GM12878 (cell line): ENCODE measurements at regions of chr1 and their contacts with region 1.

Region 1: DNA sequence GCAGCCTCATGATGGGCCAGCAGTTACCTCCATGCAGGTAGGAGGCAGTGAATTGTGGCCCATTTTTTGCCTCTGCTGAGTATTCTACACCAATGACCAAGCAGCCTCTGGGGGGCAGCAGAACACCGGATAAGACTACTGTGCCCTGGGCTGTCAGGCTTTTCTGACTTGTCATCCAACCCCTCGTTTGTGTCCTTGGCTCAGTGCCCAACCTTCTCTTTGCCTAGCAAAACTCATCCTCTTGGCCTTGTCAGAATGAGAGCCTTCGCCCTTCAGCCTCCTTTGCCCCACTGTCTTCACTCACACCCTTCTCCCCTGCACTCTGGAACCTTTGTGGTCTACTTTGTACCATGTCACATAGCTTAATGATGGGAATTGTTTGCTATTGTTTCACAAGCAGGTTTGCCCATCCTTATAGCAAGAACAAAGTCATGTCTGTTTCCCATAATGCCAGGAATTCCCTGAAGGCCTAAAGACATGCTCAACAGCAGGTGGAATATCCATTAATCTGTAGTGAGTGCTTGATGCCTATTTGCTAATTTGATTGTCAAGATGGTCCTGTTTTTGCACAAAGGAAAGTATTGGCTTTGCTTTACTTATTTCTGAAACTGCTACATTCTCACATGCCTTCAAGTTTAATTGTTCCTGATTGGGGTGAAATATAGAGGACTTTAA is 255.9 kb downstream of the HHAT start:
- DNase-seq: peak; percentile 13
- ATAC-seq: peak; percentile 97
- H3K4me3 ChIP-seq: no peak overlapping the region
- H3K27ac ChIP-seq: no peak overlapping the region
- H3K4me1 ChIP-seq: no peaks in the 10 kb centered on the region
- H3K27me3 ChIP-seq: no peaks in the 10 kb centered on the region
- CTCF ChIP-seq: peak; percentile 74 to 78 (median 75)
- EP300 ChIP-seq: no peak
- POLR2A ChIP-seq: no peak
- RAD21 ChIP-seq: peak; percentile 94

Region 2: DNA sequence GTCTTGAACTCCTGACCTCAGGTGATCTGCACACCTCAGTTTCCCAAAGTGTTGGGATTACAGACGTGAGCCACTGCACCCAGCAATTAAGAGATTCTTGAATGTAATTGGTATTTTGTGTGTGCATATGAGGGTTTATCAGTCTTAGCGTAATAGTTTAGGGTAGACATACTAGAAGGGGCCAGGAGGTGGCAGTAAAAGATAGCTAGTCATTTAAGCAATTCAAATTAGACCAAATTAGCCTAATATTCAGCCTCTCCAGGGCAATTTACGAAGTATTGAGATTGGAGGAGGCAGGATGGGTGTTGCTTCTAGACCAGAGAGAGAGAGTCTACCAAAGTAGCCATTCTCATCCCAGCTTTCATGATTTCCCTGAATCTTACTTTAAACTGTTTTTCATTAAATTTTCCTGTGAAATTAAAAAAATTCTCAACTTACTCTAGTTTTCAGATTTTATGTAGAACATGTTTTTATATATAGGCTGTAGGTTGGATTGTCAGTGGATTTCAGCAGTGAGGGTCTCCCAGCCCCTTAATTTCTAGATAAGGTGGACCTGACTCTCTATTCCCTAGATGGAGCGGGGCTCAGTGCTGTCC is 136.2 kb before region 1 on chr1:
- CTCF ChIA-PET with region 1: interaction called, 45 read pairs
- POLR2A ChIA-PET with region 1: no interaction called
- RAD21 ChIA-PET with region 1: interaction called, 10 read pairs
- SMC1A ChIA-PET with region 1: interaction called, 6 read pairs
- in situ Hi-C with region 1: no loop called
- intact Hi-C with region 1: loop called (anchors 1 kb)
- DNase-seq: no peak
- ATAC-seq: peak; percentile 81
- H3K4me3 ChIP-seq: no peak overlapping the region
- H3K27ac ChIP-seq: no peak overlapping the region
- H3K4me1 ChIP-seq: no peaks in the 10 kb centered on the region
- H3K27me3 ChIP-seq: no peaks in the 10 kb centered on the region
- CTCF ChIP-seq: peak; percentile 49 to 59 (median 54)
- EP300 ChIP-seq: no peak
- POLR2A ChIP-seq: no peak
- RAD21 ChIP-seq: peak; percentile 60

Region 3: GRCh38 chr1:210944252-210944651 is 359.7 kb after region 1 on chr1:
- CTCF ChIA-PET with region 1: interaction called, 14 read pairs
- POLR2A ChIA-PET with region 1: no interaction called
- RAD21 ChIA-PET with region 1: interaction called, 5 read pairs
- SMC1A ChIA-PET with region 1: interaction called, 6 read pairs
- in situ Hi-C with region 1: loop called (anchors 25 kb)
- intact Hi-C with region 1: no loop called
- DNase-seq: no peak
- ATAC-seq: no peak
- H3K4me3 ChIP-seq: no peak overlapping the region
- H3K27ac ChIP-seq: no peak overlapping the region
- H3K4me1 ChIP-seq: no peaks in the 10 kb centered on the region
- H3K27me3 ChIP-seq: no peaks in the 10 kb centered on the region
- CTCF ChIP-seq: no peak
- EP300 ChIP-seq: no peak
- POLR2A ChIP-seq: no peak
- RAD21 ChIP-seq: no peak

Region 4: DNA sequence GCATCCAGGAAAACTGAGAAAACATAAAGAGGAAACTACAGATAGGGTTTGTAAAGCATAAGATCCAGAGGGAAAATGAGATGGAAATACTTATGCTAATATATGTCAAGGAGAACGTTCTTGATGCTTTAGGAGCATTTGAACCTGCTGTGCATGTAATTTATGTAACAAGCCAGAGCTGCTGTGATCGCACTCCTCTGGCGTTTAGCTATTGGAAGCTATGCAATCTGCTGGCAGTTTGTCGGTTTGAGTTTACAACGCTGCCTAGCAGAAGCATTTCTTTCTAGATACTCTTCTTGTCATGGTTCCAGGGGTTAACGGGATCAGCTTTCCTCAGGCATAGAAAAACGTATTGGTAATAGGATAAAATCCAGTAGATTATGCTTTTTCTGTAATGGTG is 366.7 kb after region 1 on chr1:
- CTCF ChIA-PET with region 1: interaction called, 17 read pairs
- POLR2A ChIA-PET with region 1: no interaction called
- RAD21 ChIA-PET with region 1: interaction called, 5 read pairs
- SMC1A ChIA-PET with region 1: interaction called, 6 read pairs
- in situ Hi-C with region 1: loop called (anchors 25 kb)
- intact Hi-C with region 1: loop called (anchors 1 kb)
- DNase-seq: no peak
- ATAC-seq: no peak
- H3K4me3 ChIP-seq: no peak overlapping the region
- H3K27ac ChIP-seq: no peak overlapping the region
- H3K4me1 ChIP-seq: no peaks in the 10 kb centered on the region
- H3K27me3 ChIP-seq: no peaks in the 10 kb centered on the region
- CTCF ChIP-seq: no peak
- EP300 ChIP-seq: no peak
- POLR2A ChIP-seq: no peak
- RAD21 ChIP-seq: no peak

Region 5: DNA sequence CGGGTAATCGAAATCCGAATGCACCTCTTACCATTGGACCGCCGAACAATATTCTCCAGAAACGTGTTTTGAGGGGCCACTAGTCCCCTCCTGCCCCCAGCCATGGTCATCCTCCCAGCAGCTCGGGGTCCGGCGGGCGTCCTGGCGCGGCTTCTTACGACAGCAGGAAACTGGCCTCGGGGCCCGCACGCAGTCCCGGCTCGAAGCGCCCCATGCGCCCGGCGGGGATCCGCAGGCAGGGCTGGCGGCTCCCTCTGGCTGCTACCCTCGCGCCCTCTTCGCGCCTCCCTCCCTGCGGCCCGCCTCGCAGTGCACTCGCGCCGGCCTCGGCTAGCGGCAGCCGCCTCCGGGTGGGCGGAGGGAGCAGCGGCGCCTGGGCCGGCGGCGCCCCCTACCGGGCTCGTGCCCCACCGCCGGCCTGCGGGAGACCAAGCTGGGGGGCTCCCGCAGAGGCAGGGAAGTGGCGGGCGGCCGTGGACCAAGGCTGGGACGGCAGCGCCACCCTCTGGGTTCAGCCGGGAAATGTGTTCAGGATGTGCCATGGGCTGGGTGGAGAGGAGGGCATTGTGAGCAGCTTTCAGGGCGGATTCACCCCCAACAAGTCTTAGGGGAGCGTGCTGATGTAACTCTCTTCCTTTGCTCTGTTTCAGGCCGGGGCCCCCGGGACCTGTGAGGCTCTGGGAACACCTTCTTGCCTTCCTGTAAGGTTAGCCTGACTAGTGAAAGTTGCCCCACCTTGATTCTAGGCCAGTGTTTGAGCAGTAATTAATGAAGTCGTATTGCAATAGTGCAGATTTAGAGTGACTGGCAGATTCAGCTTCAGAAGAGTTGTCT is 549.5 kb after region 1 on chr1 and contains the start of gene KCNH1:
- CTCF ChIA-PET with region 1: interaction called, 14 read pairs
- POLR2A ChIA-PET with region 1: no interaction called
- RAD21 ChIA-PET with region 1: interaction called, 8 read pairs
- SMC1A ChIA-PET with region 1: interaction called, 12 read pairs
- in situ Hi-C with region 1: loop called (anchors 5 kb)
- intact Hi-C with region 1: loop called (anchors 1 kb)
- DNase-seq: peak; percentile 7
- ATAC-seq: peak; percentile 97
- H3K4me3 ChIP-seq: no peak within 1 kb of the TSS
- H3K27ac ChIP-seq: no peak within 1 kb of the TSS
- H3K4me1 ChIP-seq: no peaks in the 10 kb centered on the region
- H3K27me3 ChIP-seq: peaks cover 0 to 4% of the 10 kb centered on the region in 2 experiments; a peak in 2 of 4 replicates
- CTCF ChIP-seq: peak; percentile 69 to 83 (median 81)
- EP300 ChIP-seq: no peak
- POLR2A ChIP-seq: no peak
- RAD21 ChIP-seq: peak; percentile 63
- polyA plus RNA-seq, gene KCNH1: 0.02 TPM in 1 of 2 experiments, not detected in the other

Region 6: DNA sequence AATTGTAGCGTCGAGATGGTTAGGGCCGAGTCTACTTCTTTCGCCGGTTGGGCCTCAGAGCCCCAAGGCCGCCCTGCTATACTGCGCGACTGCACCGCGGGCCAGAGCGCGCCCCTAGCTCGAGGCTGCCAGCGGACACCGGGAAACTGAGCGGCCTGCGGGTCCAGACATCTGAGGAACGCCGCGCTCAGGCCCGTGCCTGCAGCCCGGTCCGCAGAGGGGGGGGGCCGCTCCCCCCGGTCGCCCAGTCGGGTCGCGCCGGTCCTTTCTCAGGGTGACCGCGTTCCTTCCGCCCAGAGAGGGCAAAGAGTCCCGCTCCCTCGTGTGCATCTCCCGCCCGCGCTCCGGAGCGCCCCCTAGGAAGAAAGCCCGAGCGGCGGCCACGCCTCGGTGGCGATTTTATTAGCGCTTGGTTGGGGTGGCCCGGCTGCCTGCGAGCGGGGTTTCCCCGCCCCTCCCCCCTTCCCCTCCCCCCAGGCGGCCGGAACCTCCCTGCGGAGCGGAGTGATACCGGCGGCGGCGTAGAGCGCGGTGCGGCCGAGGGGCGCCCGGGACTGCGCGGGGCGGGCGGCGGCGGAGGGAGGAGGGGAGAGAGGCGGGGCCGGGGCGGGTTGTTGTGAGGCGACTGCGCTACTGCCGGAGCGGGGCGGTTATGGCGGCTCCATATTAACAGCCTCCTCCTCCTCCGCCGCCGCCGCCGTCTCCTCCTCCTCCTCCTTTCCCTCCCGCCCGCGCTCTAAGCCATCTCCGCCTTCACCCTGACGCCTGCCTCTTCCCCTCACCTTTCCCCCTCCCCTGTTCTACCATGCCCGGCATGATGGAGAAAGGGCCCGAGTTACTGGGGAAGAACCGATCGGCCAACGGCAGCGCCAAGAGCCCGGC is 674.4 kb after region 1 on chr1 and contains the start of gene RCOR3:
- CTCF ChIA-PET with region 1: no interaction called
- POLR2A ChIA-PET with region 1: no interaction called
- RAD21 ChIA-PET with region 1: no interaction called
- SMC1A ChIA-PET with region 1: no interaction called
- in situ Hi-C with region 1: no loop called
- intact Hi-C with region 1: loop called (anchors 5 kb)
- DNase-seq: peak; percentile 51
- ATAC-seq: peak; percentile 83
- H3K4me3 ChIP-seq: peak within 1 kb of the TSS; percentile 96
- H3K27ac ChIP-seq: peak within 1 kb of the TSS; percentile 96
- H3K4me1 ChIP-seq: no peaks in the 10 kb centered on the region
- H3K27me3 ChIP-seq: no peaks in the 10 kb centered on the region
- CTCF ChIP-seq: peak; percentile 51 to 83 (median 70)
- EP300 ChIP-seq: peak; percentile 37 to 38; a peak in 1 of 4 replicates
- POLR2A ChIP-seq: peak; percentile 78
- RAD21 ChIP-seq: peak; percentile 31
- polyA plus RNA-seq, gene RCOR3: 8.0 to 8.2 TPM